ENCODE measurements at regions of chr5 and their contacts with region 1.

Region 1: GRCh38 chr5:157743163-157744050 is at the start of gene LSM11:
- DNase-seq: peak; percentile 90
- ATAC-seq: peak; percentile 93
- H3K4me3 Mint-ChIP-seq: peak within 1 kb of the TSS; percentile 93
- H3K27ac Mint-ChIP-seq: no peak within 1 kb of the TSS
- H3K4me1 Mint-ChIP-seq: peaks cover 12% of the 10 kb centered on the region
- H3K27me3 Mint-ChIP-seq: peaks cover 20% of the 10 kb centered on the region
- CTCF ChIP-seq: peak; percentile 99
- total RNA-seq, gene LSM11: 5.2 to 5.8 TPM (median 5.4 TPM) in 3 replicates

Region 2: DNA sequence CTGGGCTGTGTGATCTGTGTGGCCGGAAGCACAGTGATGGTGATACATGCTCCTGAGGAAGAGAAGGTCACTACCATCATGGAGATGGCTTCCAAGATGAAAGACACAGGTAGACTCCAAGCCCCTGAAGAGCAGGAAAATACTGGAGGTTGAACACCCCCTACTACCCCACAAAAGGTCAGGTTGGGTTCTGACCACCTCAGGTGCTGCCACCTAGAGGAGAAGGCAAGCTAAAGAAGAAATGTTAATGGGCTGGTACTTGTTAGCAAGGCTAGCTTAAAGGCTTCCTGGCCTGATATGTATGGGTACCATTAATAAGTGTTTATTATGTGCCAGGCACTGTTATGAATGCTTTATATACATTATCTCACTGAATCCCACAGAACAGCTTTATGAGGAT is 271.7 kb before region 1 on chr5:
- CTCF ChIA-PET with region 1: interaction called, 13 read pairs
- POLR2A ChIA-PET with region 1: no interaction called
- DNase-seq: peak; percentile 50
- ATAC-seq: peak; percentile 90
- H3K4me3 Mint-ChIP-seq: no peak overlapping the region
- H3K27ac Mint-ChIP-seq: no peak overlapping the region
- H3K4me1 Mint-ChIP-seq: no peaks in the 10 kb centered on the region
- H3K27me3 Mint-ChIP-seq: no peaks in the 10 kb centered on the region
- CTCF ChIP-seq: no peak; the same call in 1 of the 2 replicates

Region 3: GRCh38 chr5:157607371-157608161 is 135.8 kb before region 1 on chr5:
- CTCF ChIA-PET with region 1: no interaction called
- POLR2A ChIA-PET with region 1: no interaction called
- DNase-seq: no peak
- ATAC-seq: no peak
- H3K4me3 Mint-ChIP-seq: no peak overlapping the region
- H3K27ac Mint-ChIP-seq: no peak overlapping the region
- H3K4me1 Mint-ChIP-seq: no peaks in the 10 kb centered on the region; the same call in 1 of the 2 replicates
- H3K27me3 Mint-ChIP-seq: no peaks in the 10 kb centered on the region
- CTCF ChIP-seq: no peak

Region 4: GRCh38 chr5:157651623-157652549 is 91.5 kb before region 1 on chr5 and contains the start of gene SOX30:
- CTCF ChIA-PET with region 1: interaction called, 18 read pairs
- POLR2A ChIA-PET with region 1: no interaction called
- DNase-seq: peak; percentile 89
- ATAC-seq: peak; percentile 94
- H3K4me3 Mint-ChIP-seq: peak within 1 kb of the TSS; percentile 57
- H3K27ac Mint-ChIP-seq: no peak within 1 kb of the TSS
- H3K4me1 Mint-ChIP-seq: no peaks in the 10 kb centered on the region
- H3K27me3 Mint-ChIP-seq: peaks cover 45% of the 10 kb centered on the region
- CTCF ChIP-seq: no peak
- total RNA-seq, gene SOX30: 0.41 to 0.55 TPM (median 0.46 TPM) in 3 replicates

Region 5: GRCh38 chr5:157681048-157681447 is 62.4 kb before region 1 on chr5:
- CTCF ChIA-PET with region 1: interaction called, 13 read pairs
- POLR2A ChIA-PET with region 1: no interaction called
- DNase-seq: no peak
- ATAC-seq: no peak
- H3K4me3 Mint-ChIP-seq: no peak overlapping the region
- H3K27ac Mint-ChIP-seq: no peak overlapping the region
- H3K4me1 Mint-ChIP-seq: no peaks in the 10 kb centered on the region
- H3K27me3 Mint-ChIP-seq: no peaks in the 10 kb centered on the region
- CTCF ChIP-seq: no peak

Region 6: DNA sequence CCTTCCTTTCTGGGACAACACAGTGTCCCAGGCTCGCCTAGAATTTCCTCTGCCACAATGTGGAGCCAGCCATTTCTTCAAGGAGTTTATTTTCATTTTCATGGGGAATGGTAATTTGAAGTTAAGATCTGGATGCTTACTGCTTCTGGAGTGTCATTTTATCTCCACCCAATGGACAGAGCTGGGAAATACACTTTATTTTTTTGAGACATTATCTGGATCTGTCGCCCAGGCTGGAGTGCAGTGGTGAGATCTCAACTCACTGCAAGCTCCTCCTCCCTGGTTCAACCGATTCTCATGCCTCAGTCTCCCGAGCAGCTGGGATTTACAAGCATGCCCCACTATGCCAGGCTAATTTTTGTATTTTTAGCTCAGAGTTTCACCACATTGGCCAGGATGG is 24.9 kb before region 1 on chr5:
- CTCF ChIA-PET with region 1: interaction called, 26 read pairs
- POLR2A ChIA-PET with region 1: no interaction called
- DNase-seq: no peak
- ATAC-seq: peak; percentile 74
- H3K4me3 Mint-ChIP-seq: no peak overlapping the region
- H3K27ac Mint-ChIP-seq: peak overlapping the region; percentile 65; the same call in 1 of the 2 replicates
- H3K4me1 Mint-ChIP-seq: peaks cover 7% of the 10 kb centered on the region
- H3K27me3 Mint-ChIP-seq: no peaks in the 10 kb centered on the region
- CTCF ChIP-seq: 0 out of 2 replicates have a peak, but pooled peaks have one; percentile 19

Region 7: DNA sequence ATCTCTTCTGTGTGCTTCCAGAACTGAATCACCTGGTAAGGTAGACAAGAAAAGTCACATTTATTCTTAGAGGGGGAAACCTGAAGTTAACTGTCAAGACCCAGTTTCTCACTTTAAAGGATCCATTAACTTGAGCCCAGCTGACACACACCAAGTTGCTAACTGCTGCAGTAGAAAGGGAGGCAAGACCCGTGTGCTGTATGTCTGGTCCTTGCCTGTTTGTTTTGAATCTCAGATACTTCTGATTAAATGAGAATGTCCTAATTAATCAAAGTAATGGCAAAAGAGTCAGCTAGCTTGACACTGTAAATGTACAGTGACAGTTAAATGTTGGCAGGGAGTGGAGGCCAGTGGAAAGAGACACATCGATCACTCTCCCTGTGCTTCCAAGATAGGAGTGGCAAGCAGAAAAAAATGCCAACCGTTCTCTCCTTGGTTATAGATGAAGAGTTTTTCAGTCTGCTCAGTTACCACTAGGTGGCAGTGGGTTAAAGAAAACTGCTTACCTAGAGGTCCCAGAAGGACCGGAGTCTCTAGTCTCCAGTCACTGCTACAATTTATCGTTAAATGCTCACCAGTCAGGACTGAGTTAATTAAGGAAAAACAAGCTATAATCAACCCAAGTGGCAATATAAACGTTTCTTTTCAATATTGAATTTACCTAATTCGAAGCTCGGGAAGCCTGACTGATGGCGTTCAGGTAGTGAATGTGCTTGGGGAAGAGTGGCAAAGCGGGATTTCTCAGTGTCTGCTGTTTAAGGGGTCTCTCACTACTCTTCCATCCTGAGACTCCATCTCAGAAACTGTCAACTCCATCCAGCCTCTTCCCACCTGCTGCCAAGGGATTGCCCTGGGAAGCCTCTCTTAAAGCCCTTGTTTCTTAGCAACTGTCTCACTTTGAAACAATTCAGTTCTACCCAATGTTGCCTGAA is 18.5 kb after region 1 on chr5:
- CTCF ChIA-PET with region 1: interaction called, 20 read pairs
- POLR2A ChIA-PET with region 1: no interaction called
- DNase-seq: no peak
- ATAC-seq: peak; percentile 98
- H3K4me3 Mint-ChIP-seq: no peak overlapping the region
- H3K27ac Mint-ChIP-seq: no peak overlapping the region
- H3K4me1 Mint-ChIP-seq: no peaks in the 10 kb centered on the region
- H3K27me3 Mint-ChIP-seq: no peaks in the 10 kb centered on the region
- CTCF ChIP-seq: peak; percentile 67

Region 8: DNA sequence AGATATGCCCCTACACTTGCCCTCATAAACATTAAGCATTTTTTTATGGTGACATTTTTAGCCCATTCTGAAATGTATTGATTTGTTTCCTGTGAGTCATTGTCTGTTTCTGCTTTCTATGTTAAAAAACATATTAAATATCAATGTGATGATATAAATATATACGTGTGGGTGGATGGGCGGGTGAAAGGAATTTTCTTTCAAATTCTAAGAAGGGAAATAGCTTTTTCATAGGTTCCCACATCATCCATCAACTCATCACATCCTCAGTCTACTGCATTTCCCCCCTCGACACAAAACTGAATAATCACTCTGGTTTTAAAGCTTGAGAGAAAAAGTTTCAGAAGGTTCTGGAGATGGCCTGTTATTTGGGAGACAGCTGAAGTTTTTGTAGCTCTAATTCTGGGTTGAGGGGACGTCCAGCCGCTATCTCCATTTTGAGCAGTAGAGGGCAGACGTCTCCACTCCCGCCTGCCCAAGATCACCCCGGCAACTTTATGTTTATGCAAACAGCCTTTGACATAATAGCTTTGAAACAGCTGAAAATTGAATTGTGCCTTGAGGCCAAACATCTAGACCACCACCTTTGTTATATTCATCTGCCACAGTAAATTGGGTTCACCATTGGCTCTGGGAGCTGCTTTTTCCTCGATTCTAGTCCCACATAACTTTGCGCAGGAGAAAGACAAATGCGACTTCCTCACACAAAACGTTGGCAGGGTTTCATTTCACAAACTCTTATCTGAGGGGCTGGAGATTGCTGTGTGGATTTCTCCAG is 331.8 kb after region 1 on chr5:
- CTCF ChIA-PET with region 1: no interaction called
- POLR2A ChIA-PET with region 1: no interaction called
- DNase-seq: peak; percentile 66
- ATAC-seq: peak; percentile 87
- H3K4me3 Mint-ChIP-seq: 0 out of 2 replicates have a peak overlapping the region, but pooled peaks have one; percentile 15
- H3K27ac Mint-ChIP-seq: no peak overlapping the region
- H3K4me1 Mint-ChIP-seq: peaks cover 14% of the 10 kb centered on the region
- H3K27me3 Mint-ChIP-seq: peaks cover 3% of the 10 kb centered on the region
- CTCF ChIP-seq: peak; percentile 66

Measured in WTC11 (cell line).